IMR-90 (cell line): ENCODE measurements at regions of chr20 and their contacts with region 1.

Region 1: DNA sequence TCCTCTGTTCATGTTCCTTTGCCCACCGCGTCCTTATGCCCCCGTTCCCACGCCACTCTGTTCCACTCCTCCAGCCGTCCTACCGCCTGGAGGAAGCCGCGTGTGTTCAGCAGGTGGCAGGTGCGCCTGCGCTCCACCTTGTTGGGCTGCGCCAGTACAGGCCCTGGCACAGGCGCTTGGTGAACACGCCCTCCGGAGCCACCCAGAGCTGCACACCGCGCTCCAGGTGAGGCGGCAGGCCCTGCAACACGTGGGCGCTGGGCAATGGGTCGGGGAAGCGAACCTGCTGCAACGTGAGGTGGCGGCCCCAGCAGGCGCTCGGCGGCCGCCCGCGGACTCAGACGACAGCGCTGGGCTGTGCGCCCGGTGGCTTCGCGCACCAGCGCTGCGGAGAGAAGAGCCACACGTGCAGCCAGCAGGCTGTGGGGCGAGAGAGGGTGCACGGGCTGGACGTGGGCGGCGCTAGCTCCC is 4.1 kb upstream of the FOXS1 start:
- DNase-seq: no peak
- ATAC-seq: no peak
- H3K4me3 ChIP-seq: no peak overlapping the region
- H3K27ac ChIP-seq: no peak overlapping the region
- H3K4me1 ChIP-seq: no peaks in the 10 kb centered on the region
- H3K27me3 ChIP-seq: peaks cover 60% of the 10 kb centered on the region
- CTCF ChIP-seq: no peak
- POLR2A ChIP-seq: no peak
- RAD21 ChIP-seq: no peak

Region 2: GRCh38 chr20:31751126-31751525 is 98.4 kb before region 1 on chr20:
- CTCF ChIA-PET with region 1: no interaction called
- POLR2A ChIA-PET with region 1: no interaction called
- dilution Hi-C with region 1: no loop called
- in situ Hi-C with region 1: no loop called
- intact Hi-C with region 1: no loop called
- DNase-seq: peak; percentile 97
- ATAC-seq: peak; percentile 81
- H3K4me3 ChIP-seq: no peak overlapping the region
- H3K27ac ChIP-seq: peak overlapping the region; percentile 91; the same call in 1 of the 2 replicates
- H3K4me1 ChIP-seq: peaks cover 12% of the 10 kb centered on the region
- H3K27me3 ChIP-seq: no peaks in the 10 kb centered on the region
- CTCF ChIP-seq: no peak
- POLR2A ChIP-seq: no peak
- RAD21 ChIP-seq: no peak

Region 3: GRCh38 chr20:31894980-31895675 is 45.6 kb after region 1 on chr20:
- CTCF ChIA-PET with region 1: no interaction called
- POLR2A ChIA-PET with region 1: no interaction called
- dilution Hi-C with region 1: no loop called
- in situ Hi-C with region 1: no loop called
- intact Hi-C with region 1: no loop called
- DNase-seq: peak; percentile 49
- ATAC-seq: peak; percentile 83
- H3K4me3 ChIP-seq: no peak overlapping the region
- H3K27ac ChIP-seq: no peak overlapping the region
- H3K4me1 ChIP-seq: no peaks in the 10 kb centered on the region
- H3K27me3 ChIP-seq: peaks cover 19% of the 10 kb centered on the region
- CTCF ChIP-seq: no peak
- POLR2A ChIP-seq: no peak
- RAD21 ChIP-seq: no peak

Region 4: DNA sequence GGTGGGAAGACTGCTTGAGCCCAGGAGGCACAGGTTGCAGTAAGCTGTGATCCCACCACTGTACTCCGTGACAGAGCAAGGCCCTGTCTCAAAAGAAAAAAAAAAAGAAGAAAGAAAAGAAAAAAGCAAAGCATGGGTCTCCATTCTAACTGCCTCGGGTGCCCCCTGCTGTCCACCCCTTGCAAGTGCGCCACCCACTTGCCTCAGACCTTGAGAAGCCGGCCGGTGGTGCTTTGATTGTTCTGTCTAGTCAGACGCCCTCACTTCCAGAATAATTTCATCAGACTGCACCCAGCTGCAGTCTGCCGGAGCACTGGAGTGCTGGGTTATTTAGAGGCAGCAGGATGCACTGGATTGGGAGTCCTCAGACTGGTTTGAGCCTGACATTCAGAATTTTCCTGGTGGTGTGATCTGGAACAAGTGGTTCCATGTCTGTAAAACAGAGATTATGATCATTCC is 242.4 kb after region 1 on chr20:
- CTCF ChIA-PET with region 1: interaction called, 8 read pairs
- POLR2A ChIA-PET with region 1: no interaction called
- dilution Hi-C with region 1: no loop called
- in situ Hi-C with region 1: no loop called
- intact Hi-C with region 1: loop called (anchors 1 kb)
- DNase-seq: peak; percentile 72
- ATAC-seq: peak; percentile 99
- H3K4me3 ChIP-seq: no peak overlapping the region
- H3K27ac ChIP-seq: no peak overlapping the region
- H3K4me1 ChIP-seq: no peaks in the 10 kb centered on the region; the same call in 1 of the 2 replicates
- H3K27me3 ChIP-seq: peaks cover 43% of the 10 kb centered on the region
- CTCF ChIP-seq: peak; percentile 94
- POLR2A ChIP-seq: no peak
- RAD21 ChIP-seq: peak; percentile 91